ENCODE measurements at regions of chr3 and their contacts with region 1.

Region 1: DNA sequence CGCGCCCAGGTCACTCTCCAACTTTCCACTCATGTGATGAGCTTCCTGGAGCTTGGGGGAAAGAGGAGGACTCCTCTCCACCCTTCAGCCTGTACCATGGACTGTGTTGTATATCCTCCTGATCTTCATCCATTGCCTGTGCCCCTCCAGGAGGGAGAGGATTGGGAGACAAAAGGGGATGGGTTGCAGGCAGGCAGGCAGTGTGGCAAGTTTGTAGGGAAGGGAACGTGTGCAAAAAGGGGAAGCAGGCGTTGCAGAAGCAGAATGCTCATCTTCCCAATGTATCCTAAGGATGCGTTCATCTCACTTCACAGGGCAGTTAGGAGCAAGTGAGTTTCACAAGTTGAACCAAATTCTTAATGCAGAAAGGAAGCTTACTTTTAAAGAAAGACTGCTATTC is 28.1 kb upstream of the GHSR start:
- DNase-seq: no peak
- H3K4me3 Mint-ChIP-seq: no peak overlapping the region
- H3K27ac Mint-ChIP-seq: no peak overlapping the region
- H3K4me1 Mint-ChIP-seq: peaks cover 14% of the 10 kb centered on the region
- H3K27me3 Mint-ChIP-seq: no peaks in the 10 kb centered on the region

Region 2: GRCh38 chr3:172039436-172040077 is 436.8 kb before region 1 on chr3 and contains the start of gene FNDC3B:
- CTCF ChIA-PET with region 1: no interaction called
- intact Hi-C with region 1: loop called (anchors 5 kb)
- DNase-seq: peak; percentile 96
- H3K4me3 Mint-ChIP-seq: peak within 1 kb of the TSS; percentile 91
- H3K27ac Mint-ChIP-seq: peak within 1 kb of the TSS; percentile 89
- H3K4me1 Mint-ChIP-seq: peaks cover 21% of the 10 kb centered on the region
- H3K27me3 Mint-ChIP-seq: no peaks in the 10 kb centered on the region
- total RNA-seq, gene FNDC3B: 9.2 to 13.5 TPM

Region 3: DNA sequence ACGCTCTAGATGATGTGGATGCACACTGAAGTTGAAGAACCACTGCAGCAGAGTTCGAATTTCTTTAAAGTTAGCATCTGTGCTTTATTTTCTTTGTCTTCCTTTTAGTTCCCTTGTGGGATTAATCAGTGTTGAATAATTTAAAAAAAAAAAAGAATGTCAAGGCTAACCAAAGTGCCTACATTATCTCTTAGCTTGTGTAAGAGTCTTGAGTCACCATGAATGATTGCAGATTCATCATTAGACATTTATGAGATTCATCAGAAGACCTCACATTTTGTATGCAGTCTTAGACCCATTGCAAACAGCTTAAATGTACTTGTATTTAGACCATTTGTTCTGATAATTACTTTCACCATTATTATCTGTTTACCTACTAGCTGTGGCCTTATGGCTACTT is 254.8 kb before region 1 on chr3:
- CTCF ChIA-PET with region 1: no interaction called
- intact Hi-C with region 1: no loop called
- DNase-seq: no peak
- H3K4me3 Mint-ChIP-seq: no peak overlapping the region
- H3K27ac Mint-ChIP-seq: no peak overlapping the region
- H3K4me1 Mint-ChIP-seq: peaks cover 15% of the 10 kb centered on the region
- H3K27me3 Mint-ChIP-seq: no peaks in the 10 kb centered on the region

Region 4: GRCh38 chr3:172312711-172313110 is 163.6 kb before region 1 on chr3:
- CTCF ChIA-PET with region 1: no interaction called
- intact Hi-C with region 1: no loop called
- DNase-seq: no peak
- H3K4me3 Mint-ChIP-seq: no peak overlapping the region
- H3K27ac Mint-ChIP-seq: no peak overlapping the region
- H3K4me1 Mint-ChIP-seq: peaks cover 1% of the 10 kb centered on the region
- H3K27me3 Mint-ChIP-seq: no peaks in the 10 kb centered on the region

Region 5: DNA sequence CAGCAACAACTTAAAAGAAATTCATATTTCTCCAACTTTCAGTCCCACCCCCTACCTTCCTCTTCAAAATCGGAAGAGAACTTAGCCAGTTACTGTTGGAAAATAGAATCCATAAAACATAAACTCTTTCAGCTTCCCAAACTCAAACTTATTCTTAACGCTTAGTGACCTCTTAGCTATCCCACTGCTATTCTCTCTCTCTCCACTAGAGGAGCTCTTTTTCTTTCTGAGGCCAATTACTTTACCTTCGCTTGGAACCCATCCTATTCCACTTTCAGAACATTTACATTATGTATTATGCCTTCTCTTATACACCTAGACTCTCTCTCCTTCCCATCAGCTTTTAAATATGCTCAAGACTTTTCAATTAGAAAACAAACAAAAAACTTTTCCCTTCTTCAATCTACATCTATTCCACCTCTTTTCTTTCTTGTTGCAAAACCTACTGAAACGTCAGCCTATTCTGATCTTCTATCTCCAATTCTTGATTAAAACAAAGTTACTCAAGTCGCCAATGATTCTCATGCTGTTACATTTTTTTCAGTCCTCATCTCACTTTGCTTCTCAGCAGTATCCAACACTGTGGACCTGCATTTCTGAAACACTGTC is 14.7 kb before region 1 on chr3:
- CTCF ChIA-PET with region 1: interaction called, 31 read pairs
- intact Hi-C with region 1: loop called (anchors 2 kb)
- DNase-seq: no peak
- H3K4me3 Mint-ChIP-seq: no peak overlapping the region
- H3K27ac Mint-ChIP-seq: no peak overlapping the region
- H3K4me1 Mint-ChIP-seq: peaks cover 4% of the 10 kb centered on the region
- H3K27me3 Mint-ChIP-seq: no peaks in the 10 kb centered on the region

Measured in activated naive CD4-positive, alpha-beta T cell treated with anti-CD3 and anti-CD28 coated beads for 36 hours (primary cell).